Mammary epithelial cell (primary cell): ENCODE measurements at regions of chr4 and their contacts with region 1.

Region 1: GRCh38 chr4:69823481-69824186 is 36.3 kb downstream of the SULT1E1 start:
- DNase-seq: peak; percentile 34
- H3K4me3 ChIP-seq: no peak overlapping the region
- H3K27ac ChIP-seq: no peak overlapping the region
- H3K4me1 ChIP-seq: no peaks in the 10 kb centered on the region
- H3K27me3 ChIP-seq: no peaks in the 10 kb centered on the region
- CTCF ChIP-seq: peak; percentile 76 to 88

Region 2: GRCh38 chr4:69092190-69092589 is 731.4 kb before region 1 on chr4:
- CTCF ChIA-PET with region 1: no interaction called
- dilution Hi-C with region 1: no loop called
- in situ Hi-C with region 1: no loop called
- intact Hi-C with region 1: no loop called
- DNase-seq: peak; percentile 66
- H3K4me3 ChIP-seq: no peak overlapping the region
- H3K27ac ChIP-seq: no peak overlapping the region
- H3K4me1 ChIP-seq: peaks cover 22% of the 10 kb centered on the region
- H3K27me3 ChIP-seq: no peaks in the 10 kb centered on the region
- CTCF ChIP-seq: no peak

Region 3: DNA sequence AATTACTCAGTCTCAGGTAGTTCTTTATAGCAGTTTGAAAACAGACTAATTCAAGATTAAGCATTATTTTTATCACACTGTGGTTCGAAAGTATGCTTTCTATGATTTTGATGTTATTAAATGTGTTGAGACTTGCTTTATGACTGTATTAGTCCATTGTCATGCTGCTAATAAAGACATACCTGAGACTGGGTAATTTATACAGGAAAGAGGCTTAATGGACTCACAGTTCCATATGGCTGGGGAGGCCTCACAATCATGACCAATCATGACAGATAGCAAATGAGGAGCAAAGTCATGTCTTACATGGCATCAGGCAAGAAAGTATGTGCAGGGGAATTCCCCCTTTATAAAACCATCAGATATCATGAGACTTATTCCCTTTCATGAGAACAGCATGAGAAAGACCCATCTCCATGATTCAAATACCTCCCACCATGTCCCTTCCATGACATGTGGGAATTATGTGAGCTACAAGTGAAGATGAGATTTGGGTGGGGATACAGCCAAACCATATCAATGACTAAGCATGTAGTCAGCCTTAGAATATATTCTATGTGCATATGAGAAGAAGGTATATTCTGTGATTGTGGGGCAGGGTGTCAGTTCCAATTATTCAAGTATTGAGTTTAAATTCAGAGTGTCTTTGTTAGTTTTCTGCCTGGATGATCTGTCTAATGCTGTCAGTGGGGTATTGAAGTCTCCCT is 125.9 kb before region 1 on chr4:
- CTCF ChIA-PET with region 1: no interaction called
- dilution Hi-C with region 1: no loop called
- in situ Hi-C with region 1: loop called (anchors 10 to 25 kb)
- intact Hi-C with region 1: no loop called
- DNase-seq: peak; percentile 77
- H3K4me3 ChIP-seq: no peak overlapping the region
- H3K27ac ChIP-seq: peak overlapping the region; percentile 36
- H3K4me1 ChIP-seq: peaks cover 8% of the 10 kb centered on the region
- H3K27me3 ChIP-seq: no peaks in the 10 kb centered on the region
- CTCF ChIP-seq: no peak

Region 4: DNA sequence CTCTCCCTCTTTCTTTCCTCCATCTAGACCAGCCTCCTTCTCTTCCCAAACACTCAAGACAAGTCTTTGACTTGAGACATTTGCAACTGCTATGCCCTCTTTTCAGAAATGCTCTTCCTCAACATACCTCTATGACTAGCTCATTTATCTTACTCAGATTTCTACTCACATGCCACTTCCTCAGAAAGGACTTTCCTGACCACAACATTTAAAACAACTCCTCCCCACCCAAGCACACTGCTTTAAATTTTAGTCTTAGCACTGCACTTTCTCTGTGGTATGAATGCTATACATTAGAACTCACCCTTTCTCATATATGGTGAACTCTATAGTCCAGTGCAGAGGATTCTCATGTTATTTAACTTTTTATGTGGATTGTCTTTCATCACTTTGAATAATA is 64.7 kb after region 1 on chr4:
- CTCF ChIA-PET with region 1: no interaction called
- dilution Hi-C with region 1: no loop called
- in situ Hi-C with region 1: no loop called
- intact Hi-C with region 1: no loop called
- DNase-seq: peak; percentile 17
- H3K4me3 ChIP-seq: no peak overlapping the region
- H3K27ac ChIP-seq: no peak overlapping the region
- H3K4me1 ChIP-seq: peaks cover 4% of the 10 kb centered on the region
- H3K27me3 ChIP-seq: no peaks in the 10 kb centered on the region
- CTCF ChIP-seq: no peak